CD4-positive, alpha-beta T cell (primary cell): ENCODE measurements at regions of chr6 and their contacts with region 1.

Region 1: GRCh38 chr6:31619805-31620585 is 520 bp upstream of the PRRC2A start:
- DNase-seq: peak; percentile 86 to 99 (median 95)
- ATAC-seq: peak; percentile 79
- H3K4me3 ChIP-seq: peak overlapping the region; percentile 74
- H3K4me3 Mint-ChIP-seq: peak overlapping the region; percentile 92
- H3K27ac ChIP-seq: peak overlapping the region; percentile 97 to 99
- H3K27ac Mint-ChIP-seq: peak overlapping the region; percentile 92
- H3K4me1 ChIP-seq: peaks cover 46% of the 10 kb centered on the region
- H3K4me1 Mint-ChIP-seq: peaks cover 52% of the 10 kb centered on the region
- H3K27me3 ChIP-seq: no peaks in the 10 kb centered on the region
- H3K27me3 Mint-ChIP-seq: no peaks in the 10 kb centered on the region
- CTCF ChIP-seq: no peak

Region 2: GRCh38 chr6:31660381-31661261 is 40.6 kb after region 1 on chr6 and contains the start of gene C6orf47:
- CTCF ChIA-PET with region 1: no interaction called
- POLR2A ChIA-PET with region 1: interaction called, 23 read pairs
- intact Hi-C with region 1: loop called (anchors 1 to 2 kb)
- DNase-seq: peak; percentile 45 to 87 (median 74)
- ATAC-seq: peak; percentile 42
- H3K4me3 ChIP-seq: peak within 1 kb of the TSS; percentile 80
- H3K4me3 Mint-ChIP-seq: peak within 1 kb of the TSS; percentile 95
- H3K27ac ChIP-seq: peak within 1 kb of the TSS; percentile 70 to 71
- H3K27ac Mint-ChIP-seq: peak within 1 kb of the TSS; percentile 94
- H3K4me1 ChIP-seq: peaks cover 73% of the 10 kb centered on the region
- H3K4me1 Mint-ChIP-seq: peaks cover 73% of the 10 kb centered on the region
- H3K27me3 ChIP-seq: no peaks in the 10 kb centered on the region
- H3K27me3 Mint-ChIP-seq: no peaks in the 10 kb centered on the region
- CTCF ChIP-seq: no peak
- total RNA-seq, gene C6orf47: 9.6 to 10.5 TPM